Left cardiac atrium (tissue), 4 donors: ENCODE measurements at regions of chr9 and their contacts with region 1.

Region 1: GRCh38 chr9:121992571-121993212 is 100.4 kb downstream of the TTLL11 start:
- DNase-seq: peak; percentile 69
- ATAC-seq: peak; percentile 80 to 88

Region 2: GRCh38 chr9:121686930-121687541 is 305.7 kb before region 1 on chr9:
- intact Hi-C with region 1: loop called (anchors 5 kb)
- DNase-seq: peak; percentile 78
- ATAC-seq: peak; percentile 67 to 71

Region 3: DNA sequence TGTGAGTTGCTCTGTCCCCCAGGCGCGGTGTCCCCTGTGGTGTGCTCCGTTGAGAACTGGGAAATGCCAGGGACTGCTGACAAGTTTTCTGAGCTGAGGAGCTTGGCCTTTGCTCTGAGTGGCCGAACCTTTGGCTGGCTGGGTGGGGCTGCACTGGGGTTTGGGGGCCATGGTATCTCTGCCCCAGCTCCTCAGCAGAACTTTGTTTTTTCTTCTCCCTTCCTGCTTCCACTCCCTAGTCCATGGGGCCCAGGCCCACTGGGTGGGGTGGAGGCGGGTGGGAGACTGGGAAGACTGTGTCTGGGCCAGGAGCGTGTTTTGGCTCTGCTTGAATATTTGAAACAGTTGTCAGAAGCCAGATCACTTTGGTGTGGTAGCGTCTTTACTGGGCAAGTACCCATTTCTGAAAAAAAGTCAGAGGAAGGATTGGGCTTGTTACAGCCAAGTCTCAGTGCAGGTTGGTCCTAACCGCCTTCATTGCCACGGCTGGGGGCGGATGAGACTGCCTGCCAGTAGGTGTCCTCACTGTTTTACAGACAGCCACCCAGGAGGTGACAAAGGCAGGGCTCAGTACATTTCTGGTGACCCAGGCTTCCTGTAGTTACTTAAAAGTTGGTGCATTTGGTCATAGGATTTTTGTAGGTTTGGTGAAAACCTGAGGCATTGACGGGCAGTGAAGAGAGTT is 248.5 kb before region 1 on chr9:
- intact Hi-C with region 1: loop called (anchors 5 to 10 kb)
- DNase-seq: peak; percentile 64
- ATAC-seq: peak; percentile 56 to 62